ENCODE measurements at regions of chr9 and their contacts with region 1.

Region 1: DNA sequence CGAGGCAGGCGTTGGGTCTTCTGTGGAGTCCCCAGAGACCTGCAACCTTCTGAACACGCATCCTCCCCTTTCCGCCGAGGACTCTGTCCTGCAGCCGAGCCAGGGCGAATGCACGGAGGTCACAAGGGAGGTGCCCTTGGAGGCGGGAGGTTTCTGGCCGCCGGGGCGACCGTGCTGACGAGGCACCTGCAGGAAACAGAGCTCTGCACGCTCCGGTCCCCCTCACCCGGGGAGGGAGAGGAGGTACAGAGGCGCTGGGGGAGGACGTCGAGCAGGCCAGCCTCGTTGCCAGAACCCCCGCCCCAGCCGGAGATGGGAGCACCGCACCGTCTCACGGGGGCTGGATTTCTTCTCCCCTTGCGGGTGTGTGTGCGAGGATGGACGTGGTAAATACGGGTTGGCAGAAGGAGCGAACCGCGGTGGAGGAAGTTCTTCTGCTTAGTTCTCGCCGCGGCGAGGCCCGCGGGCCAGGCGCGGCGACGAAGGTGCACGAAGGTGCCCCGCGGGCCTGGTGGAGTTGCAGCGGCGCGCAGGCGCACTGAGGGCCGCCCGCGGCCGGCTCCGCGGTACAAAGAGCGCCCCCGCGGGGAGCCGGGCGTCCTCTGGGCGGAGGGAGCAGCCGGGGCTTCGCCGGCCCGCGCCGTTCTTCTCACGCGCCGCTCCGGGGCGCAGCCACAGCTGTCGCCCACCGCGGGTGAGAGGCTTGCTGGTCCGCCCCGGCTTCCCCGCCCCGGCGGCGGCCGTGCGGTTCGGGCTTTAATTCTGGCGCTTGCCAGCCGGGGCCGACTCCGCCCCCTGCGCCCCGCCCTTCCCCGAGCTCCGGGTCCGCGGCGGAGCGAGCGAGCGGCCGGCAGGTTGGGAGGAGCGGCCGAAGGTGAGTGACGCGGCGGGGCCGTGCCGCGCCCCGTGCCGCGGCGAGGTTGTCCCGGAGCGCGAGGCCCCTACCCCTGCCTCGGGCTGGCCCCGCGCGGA is 289.5 kb downstream of the DOCK8 start:
- DNase-seq: peak; percentile 48
- ATAC-seq: peak; percentile 92
- H3K4me3 ChIP-seq: peak within 1 kb of the TSS; percentile 43 to 70 (median 55); a peak in 5 of 6 replicates
- H3K27ac ChIP-seq: no peak within 1 kb of the TSS
- H3K4me1 ChIP-seq: peaks cover 14% of the 10 kb centered on the region
- H3K27me3 ChIP-seq: peaks cover 4 to 34% of the 10 kb centered on the region in 2 experiments; a peak in 3 of 5 replicates
- CTCF ChIP-seq: peak; percentile 56
- EP300 ChIP-seq: no peak
- POLR2A ChIP-seq: no peak
- RAD21 ChIP-seq: peak; percentile 64

Region 2: GRCh38 chr9:447230-448025 is 56.7 kb before region 1 on chr9:
- CTCF ChIA-PET with region 1: no interaction called
- POLR2A ChIA-PET with region 1: no interaction called
- in situ Hi-C with region 1: no loop called
- intact Hi-C with region 1: no loop called
- DNase-seq: no peak
- ATAC-seq: no peak
- H3K4me3 ChIP-seq: no peak overlapping the region
- H3K27ac ChIP-seq: no peak overlapping the region
- H3K4me1 ChIP-seq: no peaks in the 10 kb centered on the region
- H3K27me3 ChIP-seq: no peaks in the 10 kb centered on the region
- CTCF ChIP-seq: no peak
- EP300 ChIP-seq: no peak
- POLR2A ChIP-seq: no peak
- RAD21 ChIP-seq: no peak

Region 3: GRCh38 chr9:459491-460444 is 44.4 kb before region 1 on chr9:
- CTCF ChIA-PET with region 1: no interaction called
- POLR2A ChIA-PET with region 1: no interaction called
- in situ Hi-C with region 1: no loop called
- intact Hi-C with region 1: loop called (anchors 5 kb)
- DNase-seq: no peak
- ATAC-seq: no peak; the same call in 1 of the 3 replicates
- H3K4me3 ChIP-seq: no peak overlapping the region
- H3K27ac ChIP-seq: no peak overlapping the region
- H3K4me1 ChIP-seq: peaks cover 14% of the 10 kb centered on the region
- H3K27me3 ChIP-seq: peaks cover 0 to 1% of the 10 kb centered on the region in 2 experiments; a peak in 1 of 5 replicates
- CTCF ChIP-seq: no peak
- EP300 ChIP-seq: no peak
- POLR2A ChIP-seq: no peak
- RAD21 ChIP-seq: no peak

Region 4: GRCh38 chr9:530681-531080 is 26.5 kb after region 1 on chr9:
- CTCF ChIA-PET with region 1: no interaction called
- POLR2A ChIA-PET with region 1: no interaction called
- in situ Hi-C with region 1: no loop called
- intact Hi-C with region 1: no loop called
- DNase-seq: no peak
- ATAC-seq: no peak
- H3K4me3 ChIP-seq: no peak overlapping the region
- H3K27ac ChIP-seq: no peak overlapping the region
- H3K4me1 ChIP-seq: no peaks in the 10 kb centered on the region
- H3K27me3 ChIP-seq: no peaks in the 10 kb centered on the region; a peak in 1 of 5 replicates
- CTCF ChIP-seq: no peak
- EP300 ChIP-seq: no peak
- POLR2A ChIP-seq: no peak
- RAD21 ChIP-seq: no peak